ENCODE measurements at regions of chr20 and their contacts with region 1.

Region 1: GRCh38 chr20:34010405-34010931 is 16.8 kb downstream of the RALY start:
- DNase-seq: no peak
- ATAC-seq: no peak
- H3K4me3 ChIP-seq: no peak overlapping the region
- H3K27ac ChIP-seq: peak overlapping the region; percentile 7
- H3K4me1 ChIP-seq: peaks cover 96% of the 10 kb centered on the region
- H3K27me3 ChIP-seq: no peaks in the 10 kb centered on the region
- CTCF ChIP-seq: no peak
- EP300 ChIP-seq: no peak
- POLR2A ChIP-seq: no peak
- RAD21 ChIP-seq: no peak

Region 2: DNA sequence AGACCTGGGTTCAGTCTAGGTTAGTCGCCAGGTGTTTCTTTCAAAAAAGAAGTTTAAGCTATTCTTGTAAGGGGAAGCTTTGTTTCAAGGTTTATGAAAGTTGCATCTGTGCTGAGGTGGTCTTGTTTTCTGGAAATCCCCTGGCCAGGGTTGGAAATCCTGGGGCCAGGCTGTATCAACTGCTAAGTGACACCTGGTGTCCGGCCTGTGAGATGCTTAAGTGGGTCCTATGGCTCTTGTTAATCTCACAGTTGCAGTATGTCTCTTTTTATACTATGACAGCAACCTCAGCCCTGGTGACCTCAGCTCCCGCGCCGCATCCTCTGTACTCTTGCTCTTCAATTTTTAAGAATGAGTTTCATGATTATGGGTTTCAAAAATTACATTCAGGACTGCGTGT is 127.3 kb before region 1 on chr20:
- CTCF ChIA-PET with region 1: no interaction called
- POLR2A ChIA-PET with region 1: no interaction called
- in situ Hi-C with region 1: no loop called
- intact Hi-C with region 1: no loop called
- DNase-seq: no peak
- ATAC-seq: peak; percentile 21; the same call in 2 of the 3 replicates
- H3K4me3 ChIP-seq: no peak overlapping the region
- H3K27ac ChIP-seq: no peak overlapping the region
- H3K4me1 ChIP-seq: no peaks in the 10 kb centered on the region
- H3K27me3 ChIP-seq: peaks cover 3 to 39% of the 10 kb centered on the region in 2 experiments
- CTCF ChIP-seq: no peak
- EP300 ChIP-seq: no peak
- POLR2A ChIP-seq: no peak
- RAD21 ChIP-seq: no peak

Region 3: GRCh38 chr20:34047917-34048316 is 37.4 kb after region 1 on chr20:
- CTCF ChIA-PET with region 1: no interaction called
- POLR2A ChIA-PET with region 1: no interaction called
- in situ Hi-C with region 1: no loop called
- intact Hi-C with region 1: loop called (anchors 1 kb)
- DNase-seq: no peak
- ATAC-seq: no peak
- H3K4me3 ChIP-seq: no peak overlapping the region
- H3K27ac ChIP-seq: no peak overlapping the region
- H3K4me1 ChIP-seq: peaks cover 81% of the 10 kb centered on the region
- H3K27me3 ChIP-seq: no peaks in the 10 kb centered on the region
- CTCF ChIP-seq: no peak
- EP300 ChIP-seq: no peak
- POLR2A ChIP-seq: no peak
- RAD21 ChIP-seq: no peak

Measured in HepG2 (cell line).